CD4-positive, alpha-beta memory T cell (primary cell): ENCODE measurements at regions of chr10 and their contacts with region 1.

Region 1: GRCh38 chr10:105797234-105797890 is 1156.3 kb downstream of the SORCS3 start:
- DNase-seq: no peak
- H3K4me3 ChIP-seq: no peak overlapping the region
- H3K4me3 Mint-ChIP-seq: no peak overlapping the region
- H3K27ac ChIP-seq: no peak overlapping the region
- H3K27ac Mint-ChIP-seq: no peak overlapping the region
- H3K4me1 ChIP-seq: no peaks in the 10 kb centered on the region
- H3K4me1 Mint-ChIP-seq: peaks cover 0 to 1% (median 0%) of the 10 kb centered on the region in 4 donors
- H3K27me3 ChIP-seq: no peaks in the 10 kb centered on the region
- H3K27me3 Mint-ChIP-seq: peaks cover 0 to 2% of the 10 kb centered on the region in 2 donors

Region 2: DNA sequence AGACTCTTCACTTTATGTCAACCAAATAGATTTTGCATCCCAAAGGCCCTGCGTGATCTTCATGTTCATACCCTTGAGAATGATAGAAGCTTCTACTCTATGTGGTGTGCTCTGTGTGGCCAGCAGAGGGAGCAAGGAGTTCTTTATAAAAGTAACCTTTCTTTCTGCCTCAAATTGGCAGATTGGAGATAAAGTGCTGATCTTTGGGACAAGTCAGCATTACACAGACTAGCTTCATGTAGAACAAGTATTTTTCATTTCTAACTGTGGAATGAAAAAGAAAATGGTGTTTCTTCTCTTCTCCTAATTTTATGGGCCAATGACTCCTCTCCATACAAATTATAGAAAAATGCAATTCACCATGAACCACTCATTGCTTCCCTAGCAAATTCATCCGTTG is 153.0 kb after region 1 on chr10:
- CTCF ChIA-PET with region 1: no interaction called
- POLR2A ChIA-PET with region 1: no interaction called
- intact Hi-C with region 1: loop called (anchors 2 kb)
- DNase-seq: no peak
- H3K4me3 ChIP-seq: no peak overlapping the region
- H3K4me3 Mint-ChIP-seq: no peak overlapping the region
- H3K27ac ChIP-seq: no peak overlapping the region
- H3K27ac Mint-ChIP-seq: no peak overlapping the region
- H3K4me1 ChIP-seq: no peaks in the 10 kb centered on the region
- H3K4me1 Mint-ChIP-seq: no peaks in the 10 kb centered on the region
- H3K27me3 ChIP-seq: no peaks in the 10 kb centered on the region
- H3K27me3 Mint-ChIP-seq: no peaks in the 10 kb centered on the region

Region 3: GRCh38 chr10:106175760-106176377 is 378.5 kb after region 1 on chr10:
- CTCF ChIA-PET with region 1: no interaction called
- POLR2A ChIA-PET with region 1: no interaction called
- intact Hi-C with region 1: loop called (anchors 10 kb)
- DNase-seq: no peak
- H3K4me3 ChIP-seq: no peak overlapping the region
- H3K4me3 Mint-ChIP-seq: no peak overlapping the region
- H3K27ac ChIP-seq: no peak overlapping the region
- H3K27ac Mint-ChIP-seq: no peak overlapping the region
- H3K4me1 ChIP-seq: no peaks in the 10 kb centered on the region
- H3K4me1 Mint-ChIP-seq: no peaks in the 10 kb centered on the region
- H3K27me3 ChIP-seq: no peaks in the 10 kb centered on the region
- H3K27me3 Mint-ChIP-seq: no peaks in the 10 kb centered on the region